ENCODE measurements at regions of chr20 and their contacts with region 1.

Region 1: GRCh38 chr20:44388466-44389023 is 33.0 kb downstream of the HNF4A start:
- DNase-seq: peak; percentile 81
- H3K4me3 Mint-ChIP-seq: peak overlapping the region; percentile 24
- H3K27ac Mint-ChIP-seq: peak overlapping the region; percentile 13
- H3K4me1 Mint-ChIP-seq: peaks cover 24% of the 10 kb centered on the region
- H3K27me3 Mint-ChIP-seq: no peaks in the 10 kb centered on the region
- CTCF ChIP-seq: peak; percentile 91

Region 2: DNA sequence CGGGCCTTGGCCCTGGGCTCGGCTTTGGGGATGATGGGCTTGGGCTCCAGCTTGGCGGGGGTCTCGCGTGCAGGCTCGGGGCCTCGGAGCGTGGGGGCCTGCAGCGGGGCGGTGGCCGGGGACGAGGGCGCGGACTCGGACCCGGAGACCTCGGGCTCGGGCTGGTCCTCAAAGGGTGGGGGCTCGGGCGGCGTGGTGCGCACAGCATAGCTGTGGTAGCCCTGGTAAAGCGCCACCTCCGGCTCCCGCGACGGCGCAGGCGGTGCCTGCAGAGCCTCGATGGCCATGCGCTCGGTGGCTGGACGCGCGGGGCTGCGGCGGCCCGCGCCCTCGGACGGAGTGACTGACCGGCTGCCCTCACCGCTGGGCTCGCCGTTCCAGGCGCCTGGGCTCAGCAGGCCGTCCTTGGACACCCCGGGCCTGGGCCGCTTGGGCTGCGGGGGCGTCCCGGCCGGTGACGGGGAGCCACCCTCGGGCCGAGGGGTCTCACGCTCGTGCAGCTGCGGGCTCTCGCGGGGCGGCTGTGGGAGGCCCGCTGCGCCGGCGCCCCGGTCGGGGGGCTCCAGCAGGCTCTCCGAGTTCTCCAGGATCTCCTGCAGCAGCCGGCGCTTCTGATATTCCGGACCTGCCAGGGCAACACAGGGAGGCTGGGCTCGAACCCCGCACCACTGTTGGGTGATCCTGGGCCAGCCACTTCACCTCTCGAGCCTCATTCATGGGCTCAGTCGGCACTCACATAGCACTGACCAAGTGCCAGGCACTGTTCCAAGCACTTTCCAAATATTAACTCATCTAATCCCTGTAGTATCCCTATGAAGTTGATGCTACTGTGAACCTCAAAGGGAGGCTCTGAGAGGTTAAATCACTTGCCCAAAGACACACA is 272.5 kb before region 1 on chr20:
- CTCF ChIA-PET with region 1: interaction called, 18 read pairs
- POLR2A ChIA-PET with region 1: no interaction called
- intact Hi-C with region 1: loop called (anchors 1 kb)
- DNase-seq: no peak
- H3K4me3 Mint-ChIP-seq: no peak overlapping the region
- H3K27ac Mint-ChIP-seq: no peak overlapping the region
- H3K4me1 Mint-ChIP-seq: peaks cover 6% of the 10 kb centered on the region
- H3K27me3 Mint-ChIP-seq: no peaks in the 10 kb centered on the region
- CTCF ChIP-seq: no peak

Region 3: DNA sequence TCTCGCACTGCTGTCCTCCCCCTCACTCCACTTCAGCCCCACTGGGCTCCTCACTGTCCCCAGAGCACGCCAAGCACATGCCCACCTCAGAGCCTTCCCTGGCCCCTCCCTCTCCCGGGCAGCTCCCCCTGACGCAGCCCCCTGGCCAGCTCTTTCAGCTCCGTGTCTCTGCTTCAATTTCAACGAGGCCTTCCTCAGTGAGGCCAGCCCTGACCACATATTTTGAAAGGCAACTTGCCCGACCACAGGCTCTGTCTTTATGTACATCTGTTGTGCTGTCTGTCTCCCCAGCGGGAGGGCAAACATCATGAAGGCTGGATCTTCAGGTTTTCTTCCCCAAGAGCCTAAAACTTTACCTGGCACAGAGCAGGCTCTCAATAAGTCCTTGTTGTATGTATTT is 246.1 kb before region 1 on chr20:
- CTCF ChIA-PET with region 1: no interaction called
- POLR2A ChIA-PET with region 1: no interaction called
- intact Hi-C with region 1: no loop called
- DNase-seq: no peak
- H3K4me3 Mint-ChIP-seq: no peak overlapping the region
- H3K27ac Mint-ChIP-seq: no peak overlapping the region
- H3K4me1 Mint-ChIP-seq: no peaks in the 10 kb centered on the region
- H3K27me3 Mint-ChIP-seq: no peaks in the 10 kb centered on the region
- CTCF ChIP-seq: no peak

Region 4: DNA sequence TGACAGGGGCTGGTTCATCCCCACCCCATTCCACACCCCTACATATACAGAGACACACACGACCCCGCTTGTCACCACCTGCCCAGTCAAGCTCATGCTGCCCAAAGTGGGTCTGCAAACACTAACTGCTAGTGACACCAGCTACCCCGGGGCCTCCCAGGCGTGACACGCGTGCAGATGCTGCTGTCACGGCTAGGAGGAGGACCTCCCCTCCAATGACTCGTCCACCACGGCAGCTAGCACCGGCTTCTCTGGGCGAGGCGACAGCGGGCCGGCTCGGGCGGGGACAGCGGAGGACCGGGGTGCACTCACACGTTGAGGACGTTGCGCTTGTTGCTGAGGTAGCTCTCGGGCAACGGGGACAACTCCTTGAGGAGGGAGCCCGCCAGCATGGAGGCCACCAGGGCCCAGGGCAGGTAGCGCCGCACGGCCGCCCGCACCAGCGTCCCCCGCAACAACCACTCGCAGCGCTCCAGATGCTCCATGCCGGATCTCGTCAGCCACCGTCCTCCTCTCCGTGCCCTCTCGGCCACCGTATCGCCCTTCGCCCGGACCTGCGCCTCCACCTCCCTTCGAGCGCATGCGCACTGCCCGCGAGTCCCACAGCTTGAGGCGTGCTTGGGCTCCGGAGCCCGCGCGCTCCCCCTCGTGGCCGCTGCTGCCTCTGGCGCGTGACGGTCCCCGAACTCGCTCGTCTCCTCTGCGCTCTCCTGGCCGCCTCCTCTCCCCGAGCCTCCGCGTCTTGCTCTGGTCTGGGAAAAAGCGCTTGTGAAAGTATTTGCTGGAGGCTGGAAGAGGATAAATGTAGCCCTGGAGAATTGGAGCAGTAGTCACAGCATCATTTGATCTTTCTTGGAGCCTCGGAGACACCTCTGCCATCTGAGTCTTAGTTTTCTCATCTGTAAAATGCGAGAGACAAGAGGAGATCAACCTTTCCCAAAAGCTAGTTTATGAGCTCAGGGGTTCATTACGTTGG is 77.6 kb before region 1 on chr20 and contains the start of gene FITM2:
- CTCF ChIA-PET with region 1: interaction called, 96 read pairs
- POLR2A ChIA-PET with region 1: no interaction called
- intact Hi-C with region 1: loop called (anchors 5 kb)
- DNase-seq: peak; percentile 97
- H3K4me3 Mint-ChIP-seq: peak within 1 kb of the TSS; percentile 96
- H3K27ac Mint-ChIP-seq: peak within 1 kb of the TSS; percentile 86
- H3K4me1 Mint-ChIP-seq: peaks cover 11% of the 10 kb centered on the region
- H3K27me3 Mint-ChIP-seq: no peaks in the 10 kb centered on the region
- CTCF ChIP-seq: peak; percentile 90
- total RNA-seq, gene FITM2: 7.2 and 8.1 TPM in 2 replicates

Region 5: GRCh38 chr20:44407402-44408184 is 19.0 kb after region 1 on chr20:
- CTCF ChIA-PET with region 1: interaction called, 23 read pairs
- POLR2A ChIA-PET with region 1: interaction called, 14 read pairs
- intact Hi-C with region 1: no loop called
- DNase-seq: peak; percentile 95
- H3K4me3 Mint-ChIP-seq: no peak overlapping the region
- H3K27ac Mint-ChIP-seq: peak overlapping the region; percentile 59
- H3K4me1 Mint-ChIP-seq: peaks cover 19% of the 10 kb centered on the region
- H3K27me3 Mint-ChIP-seq: no peaks in the 10 kb centered on the region
- CTCF ChIP-seq: no peak

Region 6: DNA sequence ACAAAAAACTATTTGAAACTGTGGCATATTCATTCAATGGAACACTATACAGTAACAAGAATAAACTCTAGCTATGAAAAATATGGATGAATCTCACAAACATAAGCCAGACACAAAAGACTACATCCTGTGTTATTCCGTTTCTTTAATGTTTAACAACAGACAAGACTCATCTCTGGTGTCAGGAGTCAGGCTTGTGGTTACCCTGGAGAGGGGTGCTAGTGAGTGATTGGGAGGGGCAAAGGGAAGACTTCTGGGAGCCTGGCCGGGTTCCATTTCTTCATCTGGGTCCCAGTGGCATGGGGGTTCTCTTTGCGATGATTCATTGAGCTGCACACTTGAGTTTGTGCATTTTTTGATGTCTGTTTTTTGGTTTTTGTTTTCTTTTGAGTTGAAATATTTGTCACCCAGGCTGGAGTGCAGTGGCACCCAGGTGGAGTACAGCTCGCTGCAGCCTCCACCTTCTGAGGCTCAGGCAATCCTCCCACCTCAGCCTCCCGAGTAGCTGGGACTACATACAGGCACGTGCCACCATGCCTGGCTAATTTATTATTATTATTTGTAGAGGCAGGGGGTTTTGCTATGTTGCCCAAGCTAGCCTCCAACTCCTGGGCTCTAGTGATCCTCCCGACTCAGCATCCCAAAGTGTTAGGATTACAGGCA is 65.9 kb after region 1 on chr20:
- CTCF ChIA-PET with region 1: interaction called, 143 read pairs
- POLR2A ChIA-PET with region 1: interaction called, 6 read pairs
- intact Hi-C with region 1: no loop called
- DNase-seq: no peak
- H3K4me3 Mint-ChIP-seq: no peak overlapping the region
- H3K27ac Mint-ChIP-seq: no peak overlapping the region
- H3K4me1 Mint-ChIP-seq: no peaks in the 10 kb centered on the region
- H3K27me3 Mint-ChIP-seq: no peaks in the 10 kb centered on the region
- CTCF ChIP-seq: no peak

Region 7: GRCh38 chr20:44475694-44476560 is 87.4 kb after region 1 on chr20 and contains the start of gene TTPAL:
- CTCF ChIA-PET with region 1: interaction called, 155 read pairs
- POLR2A ChIA-PET with region 1: interaction called, 11 read pairs
- intact Hi-C with region 1: loop called (anchors 1 kb)
- DNase-seq: peak; percentile 89
- H3K4me3 Mint-ChIP-seq: peak within 1 kb of the TSS; percentile 98
- H3K27ac Mint-ChIP-seq: peak within 1 kb of the TSS; percentile 98
- H3K4me1 Mint-ChIP-seq: peaks cover 23% of the 10 kb centered on the region
- H3K27me3 Mint-ChIP-seq: no peaks in the 10 kb centered on the region
- CTCF ChIP-seq: no peak
- total RNA-seq, gene TTPAL: 34.1 and 35.4 TPM in 2 replicates